ENCODE measurements at regions of chr3 and their contacts with region 1.

Region 1: DNA sequence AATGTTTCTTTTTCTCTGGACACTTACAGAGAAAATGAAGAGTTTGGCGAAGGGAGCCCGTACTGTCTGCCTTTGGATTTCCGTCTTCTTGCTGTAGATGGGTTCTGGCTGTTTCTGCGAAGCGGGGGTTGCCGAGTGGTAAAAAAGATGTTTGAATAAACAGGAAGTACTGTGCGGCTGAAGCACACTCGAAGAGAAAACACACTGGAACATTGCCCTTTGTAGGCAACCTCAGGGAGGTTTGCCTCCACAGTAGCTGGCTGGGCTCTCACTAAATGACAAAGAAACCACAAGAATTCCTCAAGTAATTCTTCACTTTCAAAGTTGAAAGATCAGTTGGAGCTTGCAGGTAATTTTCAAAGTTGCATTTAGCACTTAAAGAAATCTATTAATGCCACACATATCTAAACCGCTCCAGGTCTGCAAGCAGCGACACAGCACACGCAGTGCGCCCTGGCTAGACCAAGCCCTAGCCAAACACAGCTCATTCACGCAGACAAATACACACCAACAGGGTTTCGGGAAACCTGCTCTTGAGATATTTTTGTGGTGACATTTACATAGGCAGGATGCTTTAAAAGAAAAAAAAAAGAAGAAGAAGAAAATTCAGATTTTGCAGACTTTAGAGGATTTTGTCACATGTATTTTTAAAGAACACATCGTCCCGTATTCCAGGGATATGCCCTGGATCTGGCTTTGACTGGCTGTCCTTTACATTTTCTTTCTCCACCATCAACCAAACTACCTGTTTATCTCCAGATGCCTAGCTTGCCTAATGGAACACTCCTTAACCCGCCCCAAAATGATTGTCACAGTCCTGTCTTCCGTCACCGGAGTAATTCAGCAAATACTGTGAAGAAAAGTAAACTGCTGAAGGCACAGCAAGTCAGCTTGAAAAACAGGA is 452.8 kb downstream of the FOXP1 start:
- DNase-seq: peak; percentile 82
- ATAC-seq: peak; percentile 61
- H3K4me3 Mint-ChIP-seq: peak overlapping the region; percentile 90
- H3K27ac Mint-ChIP-seq: peak overlapping the region; percentile 99
- H3K4me1 Mint-ChIP-seq: peaks cover 71% of the 10 kb centered on the region
- H3K27me3 Mint-ChIP-seq: no peaks in the 10 kb centered on the region

Region 2: DNA sequence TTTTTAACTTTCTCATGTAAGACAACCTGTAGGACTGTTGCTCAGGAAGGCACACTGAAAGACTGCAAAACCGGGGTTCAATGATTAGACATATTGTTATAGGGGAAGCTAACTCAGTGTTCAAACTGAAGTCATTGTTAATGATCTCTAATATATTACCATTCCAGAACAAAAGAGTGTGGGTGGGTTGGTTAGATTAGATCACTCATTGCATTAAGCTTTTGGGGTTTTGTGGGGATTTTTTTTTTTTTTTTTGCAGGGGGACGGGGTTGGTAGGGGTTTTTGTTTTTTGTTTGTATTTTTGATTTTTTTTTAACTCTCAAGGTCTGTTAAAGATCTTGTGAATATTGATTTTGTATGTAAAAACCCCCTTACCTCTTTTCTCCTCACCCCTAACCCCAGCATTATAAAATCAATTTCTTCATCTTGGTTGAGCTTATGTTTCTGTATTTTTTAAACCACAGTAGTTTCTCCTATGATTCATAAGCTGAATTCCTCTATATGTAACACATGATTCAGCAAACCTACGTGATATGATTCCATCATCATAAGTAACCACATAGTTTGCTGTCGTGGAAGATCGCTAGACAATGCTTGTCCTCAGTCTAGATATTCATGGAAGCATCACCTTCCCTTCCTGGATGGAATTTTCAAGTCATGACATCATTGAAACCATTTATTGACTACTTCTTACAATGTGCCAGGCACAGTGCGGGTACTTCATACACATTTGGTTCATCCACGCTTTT is 274.1 kb before region 1 on chr3:
- CTCF ChIA-PET with region 1: no interaction called
- POLR2A ChIA-PET with region 1: no interaction called
- intact Hi-C with region 1: loop called in 1 of 2 experiments (anchors 5 kb)
- DNase-seq: peak; percentile 8
- ATAC-seq: peak; percentile 84
- H3K4me3 Mint-ChIP-seq: no peak overlapping the region
- H3K27ac Mint-ChIP-seq: no peak overlapping the region
- H3K4me1 Mint-ChIP-seq: peaks cover 24% of the 10 kb centered on the region
- H3K27me3 Mint-ChIP-seq: peaks cover 33% of the 10 kb centered on the region

Region 3: GRCh38 chr3:70990723-70991122 is 140.0 kb before region 1 on chr3:
- CTCF ChIA-PET with region 1: no interaction called
- POLR2A ChIA-PET with region 1: interaction called, 10 read pairs
- intact Hi-C with region 1: no loop called
- DNase-seq: no peak
- ATAC-seq: peak; percentile 58
- H3K4me3 Mint-ChIP-seq: no peak overlapping the region
- H3K27ac Mint-ChIP-seq: peak overlapping the region; percentile 72
- H3K4me1 Mint-ChIP-seq: peaks cover 66% of the 10 kb centered on the region
- H3K27me3 Mint-ChIP-seq: no peaks in the 10 kb centered on the region

Region 4: GRCh38 chr3:71144525-71145253 is 14.0 kb after region 1 on chr3:
- CTCF ChIA-PET with region 1: interaction called, 7 read pairs
- POLR2A ChIA-PET with region 1: no interaction called
- intact Hi-C with region 1: loop called in 1 of 2 experiments (anchors 2 kb)
- DNase-seq: no peak
- ATAC-seq: peak; percentile 53
- H3K4me3 Mint-ChIP-seq: no peak overlapping the region
- H3K27ac Mint-ChIP-seq: peak overlapping the region; percentile 9
- H3K4me1 Mint-ChIP-seq: peaks cover 54% of the 10 kb centered on the region
- H3K27me3 Mint-ChIP-seq: no peaks in the 10 kb centered on the region

Region 5: GRCh38 chr3:71185733-71186455 is 55.2 kb after region 1 on chr3:
- CTCF ChIA-PET with region 1: no interaction called
- POLR2A ChIA-PET with region 1: no interaction called
- intact Hi-C with region 1: loop called (anchors 2 to 5 kb)
- DNase-seq: peak; percentile 38
- ATAC-seq: peak; percentile 70
- H3K4me3 Mint-ChIP-seq: no peak overlapping the region
- H3K27ac Mint-ChIP-seq: peak overlapping the region; percentile 83
- H3K4me1 Mint-ChIP-seq: peaks cover 59% of the 10 kb centered on the region
- H3K27me3 Mint-ChIP-seq: no peaks in the 10 kb centered on the region

Region 6: DNA sequence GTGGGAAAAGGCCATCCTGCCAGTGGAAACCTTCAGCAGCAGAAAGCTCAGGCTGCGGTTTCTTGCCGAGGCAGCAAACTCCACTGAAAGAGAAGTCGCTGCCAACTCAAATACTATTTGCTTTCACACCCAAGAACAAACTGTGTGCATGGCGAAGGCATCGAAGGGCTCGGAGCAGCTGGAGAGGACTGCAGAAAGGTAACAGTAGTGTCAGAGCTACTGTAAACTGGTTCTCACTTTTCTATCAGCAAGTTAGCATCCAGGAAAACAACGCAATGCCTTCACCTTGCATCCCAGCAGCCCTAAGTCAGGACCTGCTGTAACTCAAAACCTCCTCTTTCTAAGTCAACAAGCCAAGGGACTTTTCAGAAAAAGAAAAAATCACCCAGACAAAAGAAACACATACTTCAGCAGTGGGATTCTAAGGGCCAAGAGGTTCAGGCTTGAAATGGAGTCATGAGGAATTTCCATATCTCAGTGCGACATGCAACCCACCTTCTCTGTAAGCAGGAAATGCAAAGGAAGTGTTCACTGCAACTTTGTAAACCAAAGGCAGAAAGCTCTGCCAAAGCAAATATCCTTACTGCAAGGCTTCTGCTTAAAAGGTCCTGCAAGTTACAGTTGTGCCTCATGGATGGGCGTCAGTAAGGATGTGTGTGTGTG is 259.3 kb after region 1 on chr3:
- CTCF ChIA-PET with region 1: no interaction called
- POLR2A ChIA-PET with region 1: no interaction called
- intact Hi-C with region 1: loop called in 1 of 2 experiments (anchors 5 kb)
- DNase-seq: peak; percentile 52
- ATAC-seq: peak; percentile 18
- H3K4me3 Mint-ChIP-seq: peak overlapping the region; percentile 52
- H3K27ac Mint-ChIP-seq: peak overlapping the region; percentile 69
- H3K4me1 Mint-ChIP-seq: peaks cover 78% of the 10 kb centered on the region
- H3K27me3 Mint-ChIP-seq: no peaks in the 10 kb centered on the region

Region 7: GRCh38 chr3:71495708-71496472 is 365.2 kb after region 1 on chr3:
- CTCF ChIA-PET with region 1: no interaction called
- POLR2A ChIA-PET with region 1: no interaction called
- intact Hi-C with region 1: loop called in 1 of 2 experiments (anchors 5 kb)
- DNase-seq: peak; percentile 47
- ATAC-seq: peak; percentile 71
- H3K4me3 Mint-ChIP-seq: peak overlapping the region; percentile 56
- H3K27ac Mint-ChIP-seq: peak overlapping the region; percentile 89
- H3K4me1 Mint-ChIP-seq: peaks cover 75% of the 10 kb centered on the region
- H3K27me3 Mint-ChIP-seq: no peaks in the 10 kb centered on the region

Measured in activated CD4-positive, alpha-beta T cell treated with anti-CD3 and anti-CD28 coated beads for 36 hours (primary cell).